ENCODE measurements at regions of chr17 and their contacts with region 1.

Region 1: GRCh38 chr17:44503147-44504029 is at the start of gene GPATCH8:
- DNase-seq: peak; percentile 97
- ATAC-seq: peak; percentile 96
- H3K4me3 Mint-ChIP-seq: peak within 1 kb of the TSS; percentile 97
- H3K27ac Mint-ChIP-seq: peak within 1 kb of the TSS; percentile 98
- H3K4me1 Mint-ChIP-seq: peaks cover 34% of the 10 kb centered on the region
- H3K27me3 Mint-ChIP-seq: peaks cover 3% of the 10 kb centered on the region
- total RNA-seq, gene GPATCH8: 39.6 to 43.2 TPM

Region 2: GRCh38 chr17:44014437-44015172 is 488.8 kb before region 1 on chr17 and contains the start of gene TMEM101:
- CTCF ChIA-PET with region 1: no interaction called
- POLR2A ChIA-PET with region 1: no interaction called
- intact Hi-C with region 1: loop called in 1 of 2 experiments (anchors 1 kb)
- DNase-seq: peak; percentile 94
- ATAC-seq: peak; percentile 99
- H3K4me3 Mint-ChIP-seq: peak within 1 kb of the TSS; percentile 96
- H3K27ac Mint-ChIP-seq: peak within 1 kb of the TSS; percentile 96
- H3K4me1 Mint-ChIP-seq: peaks cover 7% of the 10 kb centered on the region
- H3K27me3 Mint-ChIP-seq: no peaks in the 10 kb centered on the region
- total RNA-seq, gene TMEM101: 17.6 to 22.7 TPM

Region 3: GRCh38 chr17:44186307-44187130 is 316.9 kb before region 1 on chr17 and contains the start of gene TMUB2:
- CTCF ChIA-PET with region 1: no interaction called
- POLR2A ChIA-PET with region 1: no interaction called
- intact Hi-C with region 1: loop called in 1 of 2 experiments (anchors 1 kb)
- DNase-seq: peak; percentile 100
- ATAC-seq: peak; percentile 92
- H3K4me3 Mint-ChIP-seq: peak within 1 kb of the TSS; percentile 99
- H3K27ac Mint-ChIP-seq: peak within 1 kb of the TSS; percentile 100
- H3K4me1 Mint-ChIP-seq: peaks cover 32% of the 10 kb centered on the region
- H3K27me3 Mint-ChIP-seq: no peaks in the 10 kb centered on the region
- total RNA-seq, gene TMUB2: 19.8 to 20.3 TPM

Region 4: DNA sequence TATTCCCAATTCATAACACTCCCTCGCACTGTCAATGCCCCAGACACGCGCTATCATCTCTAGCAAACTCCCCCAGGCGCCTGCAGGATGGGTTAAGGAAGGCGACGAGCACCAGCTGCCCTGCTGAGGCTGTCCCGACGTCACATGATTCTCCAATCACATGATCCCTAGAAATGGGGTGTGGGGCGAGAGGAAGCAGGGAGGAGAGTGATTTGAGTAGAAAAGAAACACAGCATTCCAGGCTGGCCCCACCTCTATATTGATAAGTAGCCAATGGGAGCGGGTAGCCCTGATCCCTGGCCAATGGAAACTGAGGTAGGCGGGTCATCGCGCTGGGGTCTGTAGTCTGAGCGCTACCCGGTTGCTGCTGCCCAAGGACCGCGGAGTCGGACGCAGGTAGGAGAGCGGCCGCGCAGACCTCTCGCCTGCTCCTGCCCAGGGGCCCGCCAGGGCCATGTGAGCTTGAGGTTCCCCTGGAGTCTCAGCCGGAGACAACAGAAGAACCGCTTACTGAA is 158.4 kb before region 1 on chr17 and contains the start of gene GRN:
- CTCF ChIA-PET with region 1: no interaction called
- POLR2A ChIA-PET with region 1: no interaction called
- intact Hi-C with region 1: loop called in 1 of 2 experiments (anchors 1 kb)
- DNase-seq: peak; percentile 92
- ATAC-seq: peak; percentile 99
- H3K4me3 Mint-ChIP-seq: peak within 1 kb of the TSS; percentile 87
- H3K27ac Mint-ChIP-seq: peak within 1 kb of the TSS; percentile 80
- H3K4me1 Mint-ChIP-seq: peaks cover 11% of the 10 kb centered on the region
- H3K27me3 Mint-ChIP-seq: no peaks in the 10 kb centered on the region
- total RNA-seq, gene GRN: 35.4 to 68.0 TPM

Region 5: GRCh38 chr17:44708401-44709181 is 205.2 kb after region 1 on chr17 and contains the start of gene DBF4B:
- CTCF ChIA-PET with region 1: no interaction called
- POLR2A ChIA-PET with region 1: no interaction called
- intact Hi-C with region 1: loop called in 1 of 2 experiments (anchors 1 kb)
- DNase-seq: peak; percentile 89
- ATAC-seq: peak; percentile 85
- H3K4me3 Mint-ChIP-seq: no peak within 1 kb of the TSS
- H3K27ac Mint-ChIP-seq: no peak within 1 kb of the TSS
- H3K4me1 Mint-ChIP-seq: peaks cover 5% of the 10 kb centered on the region
- H3K27me3 Mint-ChIP-seq: peaks cover 5% of the 10 kb centered on the region
- total RNA-seq, gene DBF4B: 23.5 to 26.4 TPM

Region 6: GRCh38 chr17:45228763-45229539 is 725.6 kb after region 1 on chr17:
- CTCF ChIA-PET with region 1: no interaction called
- POLR2A ChIA-PET with region 1: no interaction called
- intact Hi-C with region 1: loop called in 1 of 2 experiments (anchors 5 kb)
- DNase-seq: peak; percentile 93
- ATAC-seq: peak; percentile 37
- H3K4me3 Mint-ChIP-seq: peak overlapping the region; percentile 94
- H3K27ac Mint-ChIP-seq: peak overlapping the region; percentile 100
- H3K4me1 Mint-ChIP-seq: peaks cover 82% of the 10 kb centered on the region
- H3K27me3 Mint-ChIP-seq: no peaks in the 10 kb centered on the region